Heart right ventricle (tissue), 16 donors: ENCODE measurements at regions of chr9 and their contacts with region 1.

Region 1: DNA sequence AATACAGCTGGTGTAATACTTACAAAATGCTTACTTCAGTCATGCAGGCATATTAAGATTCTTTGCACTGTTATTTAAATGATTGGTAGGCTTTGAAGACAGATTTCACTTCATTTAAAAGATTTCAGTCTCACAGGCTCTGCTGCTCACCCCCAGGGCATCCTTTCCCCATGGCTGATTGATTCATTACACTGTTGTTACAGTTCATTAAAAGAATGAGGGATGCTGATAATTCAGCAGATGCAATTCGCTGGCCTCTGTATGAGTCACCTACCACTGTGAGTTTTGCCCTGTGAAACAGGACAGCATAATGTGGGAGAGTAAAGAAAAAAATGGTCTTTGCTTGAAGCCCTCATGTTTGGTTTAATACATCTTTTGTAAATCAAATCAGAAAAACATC is 246.9 kb downstream of the CYLC2 start:
- DNase-seq: no peak
- ATAC-seq: no peak
- H3K4me3 ChIP-seq: no peak overlapping the region
- H3K27ac ChIP-seq: no peak overlapping the region
- H3K4me1 ChIP-seq: no peaks in the 10 kb centered on the region
- H3K27me3 ChIP-seq: no peaks in the 10 kb centered on the region
- CTCF ChIP-seq: no peak

Region 2: DNA sequence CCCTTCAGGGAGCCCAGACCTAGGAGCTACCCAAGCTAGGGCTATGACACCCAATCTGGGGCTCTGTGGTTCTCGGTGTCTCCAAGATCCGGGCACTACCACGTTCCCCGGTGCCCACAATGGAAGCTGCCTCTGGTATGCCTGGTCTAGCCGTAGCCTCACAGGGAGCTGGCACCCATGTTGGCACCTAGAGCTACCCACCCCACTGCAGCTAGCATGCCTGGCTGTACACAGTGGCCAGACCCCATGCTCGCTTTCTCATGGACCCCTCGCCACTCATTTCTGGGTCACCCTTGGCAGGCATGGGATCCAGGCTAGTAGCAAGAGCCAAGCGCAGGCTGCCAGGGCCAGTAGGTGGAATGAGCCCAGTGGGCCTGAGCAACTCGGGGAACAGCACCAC is 137.9 kb before region 1 on chr9:
- intact Hi-C with region 1: no loop called
- DNase-seq: no peak
- ATAC-seq: no peak
- H3K4me3 ChIP-seq: no peak overlapping the region
- H3K27ac ChIP-seq: no peak overlapping the region
- H3K4me1 ChIP-seq: no peaks in the 10 kb centered on the region
- H3K27me3 ChIP-seq: no peaks in the 10 kb centered on the region
- CTCF ChIP-seq: no peak

Region 3: DNA sequence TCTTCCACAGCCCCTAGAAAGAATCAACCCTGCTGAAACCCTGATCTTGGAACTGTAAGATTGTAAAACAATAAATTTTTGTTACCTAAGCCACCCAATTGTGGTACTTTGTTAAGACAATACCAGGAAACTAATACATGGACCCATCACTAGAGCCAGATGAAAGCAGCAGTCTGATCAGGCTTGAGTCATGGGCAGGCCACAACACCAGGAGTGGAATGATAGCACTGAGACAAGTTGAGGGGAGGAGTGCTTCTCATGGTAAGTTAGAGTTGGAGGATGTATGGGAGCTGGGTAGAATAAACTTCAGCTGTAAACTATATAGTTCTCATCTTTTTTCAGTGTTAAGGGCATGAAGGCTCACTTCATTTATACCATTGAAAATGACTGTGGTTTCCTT is 1097.7 kb after region 1 on chr9:
- intact Hi-C with region 1: loop called in 1 of 10 experiments (anchors 10 kb)
- DNase-seq: no peak
- ATAC-seq: no peak
- H3K4me3 ChIP-seq: no peak overlapping the region
- H3K27ac ChIP-seq: no peak overlapping the region
- H3K4me1 ChIP-seq: no peaks in the 10 kb centered on the region
- H3K27me3 ChIP-seq: no peaks in the 10 kb centered on the region
- CTCF ChIP-seq: no peak